ENCODE measurements at regions of chr20 and their contacts with region 1.

Region 1: GRCh38 chr20:47438577-47439381 is 62.9 kb upstream of the NCOA3 start:
- DNase-seq: no peak
- ATAC-seq: peak; percentile 57; the same call in 1 of the 2 replicates
- H3K4me3 ChIP-seq: no peak overlapping the region
- H3K27ac ChIP-seq: no peak overlapping the region
- H3K4me1 ChIP-seq: no peaks in the 10 kb centered on the region
- H3K27me3 ChIP-seq: no peaks in the 10 kb centered on the region
- CTCF ChIP-seq: no peak

Region 2: GRCh38 chr20:46994341-46994740 is 444.4 kb before region 1 on chr20:
- CTCF ChIA-PET with region 1: no interaction called
- POLR2A ChIA-PET with region 1: no interaction called
- in situ Hi-C with region 1: no loop called
- intact Hi-C with region 1: no loop called
- DNase-seq: no peak
- ATAC-seq: no peak
- H3K4me3 ChIP-seq: no peak overlapping the region
- H3K27ac ChIP-seq: no peak overlapping the region
- H3K4me1 ChIP-seq: no peaks in the 10 kb centered on the region
- H3K27me3 ChIP-seq: no peaks in the 10 kb centered on the region; the same call in none of the 2 replicates
- CTCF ChIP-seq: no peak

Region 3: GRCh38 chr20:47258745-47259695 is 179.8 kb before region 1 on chr20:
- CTCF ChIA-PET with region 1: no interaction called
- POLR2A ChIA-PET with region 1: no interaction called
- in situ Hi-C with region 1: no loop called
- intact Hi-C with region 1: no loop called
- DNase-seq: no peak
- ATAC-seq: 0 out of 2 replicates have a peak, but pooled peaks have one; percentile 40
- H3K4me3 ChIP-seq: no peak overlapping the region
- H3K27ac ChIP-seq: no peak overlapping the region
- H3K4me1 ChIP-seq: 0 out of 2 replicates have a peak, but pooled peaks cover 4% of the 10 kb centered on the region
- H3K27me3 ChIP-seq: no peaks in the 10 kb centered on the region
- CTCF ChIP-seq: no peak

Region 4: DNA sequence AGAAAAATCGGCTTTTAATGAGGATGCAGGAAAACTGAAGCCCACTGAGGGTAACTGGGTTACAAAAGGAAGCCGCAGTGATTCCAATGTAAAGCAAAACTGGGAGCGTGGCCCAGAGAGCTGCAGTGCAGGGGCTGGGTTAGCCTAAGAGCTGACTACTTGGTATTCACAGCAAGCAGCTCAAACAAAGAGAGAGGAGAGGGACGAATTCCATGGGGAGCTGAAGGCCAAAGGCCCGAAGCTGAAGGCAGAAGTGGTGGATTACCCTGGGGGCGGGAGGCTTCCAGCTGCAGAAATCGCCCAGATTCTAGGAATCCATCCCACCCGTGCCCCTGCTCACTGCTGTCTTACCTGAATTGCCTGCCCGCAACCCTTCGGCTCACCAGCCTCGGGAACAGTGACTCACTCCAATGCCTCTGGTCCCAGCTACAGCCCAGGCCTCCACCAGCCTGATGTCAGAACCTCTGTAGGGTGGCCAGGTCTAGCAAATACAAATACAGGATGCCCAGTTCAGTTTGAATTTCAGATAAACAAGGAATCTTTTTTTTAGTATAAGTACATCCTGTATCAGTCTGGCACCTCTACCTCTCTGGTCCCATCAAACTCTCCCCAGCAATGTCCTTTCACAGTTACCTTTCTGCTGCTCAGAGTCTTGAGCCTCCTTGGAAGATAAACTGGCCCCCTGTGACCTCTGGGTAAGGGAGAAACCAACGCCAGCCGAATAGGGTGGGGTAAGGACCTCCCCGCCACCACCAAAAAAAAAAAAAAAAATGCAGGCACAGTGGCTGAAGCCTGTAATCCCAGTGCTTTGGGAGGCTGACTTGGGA is 67.7 kb before region 1 on chr20:
- CTCF ChIA-PET with region 1: no interaction called
- POLR2A ChIA-PET with region 1: interaction called, 10 read pairs
- in situ Hi-C with region 1: no loop called
- intact Hi-C with region 1: no loop called
- DNase-seq: no peak
- ATAC-seq: peak; percentile 82
- H3K4me3 ChIP-seq: no peak overlapping the region
- H3K27ac ChIP-seq: peak overlapping the region; percentile 86
- H3K4me1 ChIP-seq: peaks cover 30% of the 10 kb centered on the region
- H3K27me3 ChIP-seq: no peaks in the 10 kb centered on the region
- CTCF ChIP-seq: no peak

Region 5: DNA sequence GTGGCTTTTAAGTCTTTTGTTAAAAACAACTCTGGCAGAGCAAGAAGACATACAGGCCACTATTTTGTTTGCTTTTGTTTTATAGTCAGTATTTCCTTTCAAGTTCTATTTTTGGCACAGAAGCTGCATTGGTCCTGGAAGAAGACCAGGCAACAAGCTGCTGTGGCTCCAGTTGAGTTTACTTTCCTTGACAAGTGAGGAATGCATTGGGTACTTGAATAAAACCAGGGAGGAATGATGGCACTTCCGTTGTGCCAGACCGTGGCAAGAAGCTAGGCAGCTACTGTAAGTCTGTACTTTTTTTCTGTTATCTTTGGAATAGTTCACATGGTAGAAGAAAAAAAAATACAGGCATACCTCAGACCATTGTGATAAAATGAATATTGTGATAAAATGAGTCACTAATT is 129.2 kb after region 1 on chr20:
- CTCF ChIA-PET with region 1: no interaction called
- POLR2A ChIA-PET with region 1: no interaction called
- in situ Hi-C with region 1: no loop called
- intact Hi-C with region 1: no loop called
- DNase-seq: peak; percentile 27
- ATAC-seq: peak; percentile 25; the same call in 1 of the 2 replicates
- H3K4me3 ChIP-seq: no peak overlapping the region
- H3K27ac ChIP-seq: no peak overlapping the region
- H3K4me1 ChIP-seq: peaks cover 21% of the 10 kb centered on the region
- H3K27me3 ChIP-seq: no peaks in the 10 kb centered on the region
- CTCF ChIP-seq: no peak